B cell (primary cell): ENCODE measurements at regions of chr13 and their contacts with region 1.

Region 1: DNA sequence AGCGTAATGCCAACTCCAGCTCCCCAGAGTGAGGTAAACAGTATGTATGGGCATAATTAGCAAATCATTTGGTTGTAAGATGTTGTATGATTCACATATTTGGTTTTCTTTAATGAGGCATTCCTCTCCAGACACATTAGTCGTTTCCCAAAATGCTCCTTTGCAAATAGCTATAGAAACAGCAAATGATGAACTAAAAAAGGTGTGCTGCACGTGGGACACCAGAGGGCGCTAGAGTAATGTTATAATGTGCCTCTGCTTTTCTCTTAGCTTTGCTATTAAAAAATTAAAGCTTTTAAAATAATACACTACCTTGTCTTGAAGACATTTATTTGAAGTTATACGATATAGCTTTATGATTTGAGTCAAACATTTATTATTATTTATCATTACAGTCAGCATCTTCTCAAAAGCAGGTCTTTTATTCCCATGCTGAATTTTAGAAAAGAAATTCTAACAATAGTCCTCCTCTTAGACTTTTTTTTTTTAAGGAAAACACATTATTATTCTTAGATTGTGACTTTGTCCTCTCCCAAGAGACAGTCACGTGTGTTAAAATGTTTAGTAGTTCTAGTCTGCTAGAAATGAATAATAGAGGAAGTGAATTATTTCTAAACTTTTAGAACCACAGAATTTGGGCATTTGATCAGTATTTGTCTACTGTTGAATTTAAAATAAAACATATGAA is 121.6 kb upstream of the FRY start:
- DNase-seq: peak; percentile 75
- ATAC-seq: peak; percentile 49
- H3K4me3 ChIP-seq: no peak overlapping the region
- H3K4me3 Mint-ChIP-seq: no peak overlapping the region
- H3K27ac ChIP-seq: peak overlapping the region in 1 of 2 donors; percentile 7
- H3K27ac Mint-ChIP-seq: no peak overlapping the region
- H3K4me1 ChIP-seq: peaks cover 4 to 7% of the 10 kb centered on the region in 2 donors
- H3K4me1 Mint-ChIP-seq: peaks cover 10% of the 10 kb centered on the region
- H3K27me3 ChIP-seq: no peaks in the 10 kb centered on the region
- H3K27me3 Mint-ChIP-seq: peaks cover 6% of the 10 kb centered on the region
- CTCF ChIP-seq: peak; percentile 97

Region 2: DNA sequence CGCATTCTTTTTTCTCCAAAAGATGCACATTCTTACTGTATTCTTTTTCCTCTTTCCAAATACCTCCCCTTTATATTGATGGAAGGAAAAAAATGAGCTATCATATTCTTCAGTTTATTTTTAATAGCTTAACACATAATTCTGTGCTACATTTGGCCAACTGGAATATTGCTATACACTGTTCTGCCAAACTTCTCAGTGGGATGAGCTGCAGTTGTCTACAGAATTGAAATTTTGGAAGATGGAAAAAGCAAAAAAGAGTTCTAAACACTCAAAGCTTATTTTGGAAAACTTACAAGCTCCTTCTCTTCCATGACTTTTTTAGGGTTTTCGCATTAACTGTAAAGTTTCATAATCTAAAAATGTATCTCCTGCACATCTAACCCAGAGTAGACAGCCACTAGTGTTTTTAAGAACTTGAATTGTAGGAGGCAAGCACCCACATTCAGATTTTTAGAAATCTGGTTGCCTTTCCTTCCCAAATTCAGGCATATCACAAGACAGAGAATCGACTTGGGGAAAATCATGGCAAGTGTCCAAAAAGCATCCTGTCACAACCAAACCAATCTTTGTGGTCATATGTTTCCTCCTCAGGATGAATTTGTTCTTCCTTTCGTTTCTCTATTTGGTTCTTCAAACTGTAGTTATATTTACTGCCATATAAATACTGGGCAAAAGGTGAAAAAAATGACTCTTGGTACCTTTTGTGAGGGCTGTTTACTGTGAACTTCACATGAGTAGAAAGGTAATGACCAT is 10.1 kb after region 1 on chr13:
- CTCF ChIA-PET with region 1: interaction called, 32 read pairs
- POLR2A ChIA-PET with region 1: no interaction called
- intact Hi-C with region 1: no loop called
- DNase-seq: no peak
- ATAC-seq: no peak
- H3K4me3 ChIP-seq: no peak overlapping the region
- H3K4me3 Mint-ChIP-seq: no peak overlapping the region
- H3K27ac ChIP-seq: no peak overlapping the region
- H3K27ac Mint-ChIP-seq: no peak overlapping the region
- H3K4me1 ChIP-seq: peaks cover 0 to 6% of the 10 kb centered on the region in 2 donors
- H3K4me1 Mint-ChIP-seq: peaks cover 8% of the 10 kb centered on the region
- H3K27me3 ChIP-seq: no peaks in the 10 kb centered on the region
- H3K27me3 Mint-ChIP-seq: no peaks in the 10 kb centered on the region
- CTCF ChIP-seq: no peak

Region 3: DNA sequence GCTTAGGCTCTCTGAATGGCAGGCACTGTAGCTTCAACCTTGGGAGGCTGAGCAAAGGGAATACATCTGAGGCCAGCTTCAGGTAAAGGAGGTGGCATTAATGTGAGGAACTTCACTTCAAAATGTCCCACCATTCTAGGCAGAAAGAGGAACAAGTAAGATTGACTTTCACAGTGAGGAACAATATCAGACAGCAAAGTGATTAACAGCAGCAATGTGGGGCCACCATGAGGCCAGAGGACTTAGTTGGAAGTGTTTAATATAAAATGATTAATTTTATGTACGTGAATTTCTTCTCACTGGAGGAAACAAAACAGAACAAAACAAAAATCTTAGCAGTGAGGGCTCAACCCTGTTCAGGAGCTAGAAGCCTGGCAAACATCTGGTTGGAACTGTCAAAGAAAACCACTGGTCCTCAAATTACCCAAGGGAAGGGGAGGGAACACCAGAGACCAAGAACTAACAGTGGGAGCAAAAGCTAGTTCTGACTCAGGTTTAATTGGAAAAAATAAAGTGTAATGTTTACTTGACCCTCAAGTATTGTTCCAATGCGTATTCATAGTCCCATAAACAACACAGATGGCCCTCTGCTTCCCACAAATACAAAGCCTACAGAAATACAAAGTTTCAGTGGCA is 77.6 kb after region 1 on chr13:
- CTCF ChIA-PET with region 1: interaction called, 70 read pairs
- POLR2A ChIA-PET with region 1: no interaction called
- intact Hi-C with region 1: loop called (anchors 1 kb)
- DNase-seq: peak; percentile 56
- ATAC-seq: peak; percentile 45
- H3K4me3 ChIP-seq: no peak overlapping the region
- H3K4me3 Mint-ChIP-seq: no peak overlapping the region
- H3K27ac ChIP-seq: peak overlapping the region in 1 of 2 donors; percentile 16
- H3K27ac Mint-ChIP-seq: no peak overlapping the region
- H3K4me1 ChIP-seq: peaks cover 4 to 7% of the 10 kb centered on the region in 2 donors
- H3K4me1 Mint-ChIP-seq: peaks cover 9% of the 10 kb centered on the region
- H3K27me3 ChIP-seq: no peaks in the 10 kb centered on the region
- H3K27me3 Mint-ChIP-seq: no peaks in the 10 kb centered on the region
- CTCF ChIP-seq: peak; percentile 18

Region 4: GRCh38 chr13:32310134-32310706 is 400.2 kb after region 1 on chr13:
- CTCF ChIA-PET with region 1: interaction called, 23 read pairs
- POLR2A ChIA-PET with region 1: interaction called, 6 read pairs
- intact Hi-C with region 1: loop called (anchors 1 kb)
- DNase-seq: peak; percentile 71
- ATAC-seq: peak; percentile 63
- H3K4me3 ChIP-seq: peak overlapping the region in 3 of 5 experiments; percentile 21 to 31 (median 23)
- H3K4me3 Mint-ChIP-seq: peak overlapping the region; percentile 52
- H3K27ac ChIP-seq: no peak overlapping the region
- H3K27ac Mint-ChIP-seq: no peak overlapping the region
- H3K4me1 ChIP-seq: peaks cover 3 to 15% of the 10 kb centered on the region in 2 donors
- H3K4me1 Mint-ChIP-seq: peaks cover 15% of the 10 kb centered on the region
- H3K27me3 ChIP-seq: no peaks in the 10 kb centered on the region
- H3K27me3 Mint-ChIP-seq: no peaks in the 10 kb centered on the region
- CTCF ChIP-seq: peak; percentile 75

Region 5: GRCh38 chr13:32443111-32443510 is 533.1 kb after region 1 on chr13:
- CTCF ChIA-PET with region 1: interaction called, 10 read pairs
- POLR2A ChIA-PET with region 1: no interaction called
- intact Hi-C with region 1: loop called (anchors 1 kb)
- DNase-seq: peak; percentile 76
- ATAC-seq: peak; percentile 88
- H3K4me3 ChIP-seq: no peak overlapping the region
- H3K4me3 Mint-ChIP-seq: peak overlapping the region; percentile 12
- H3K27ac ChIP-seq: peak overlapping the region; percentile 19 to 55
- H3K27ac Mint-ChIP-seq: peak overlapping the region; percentile 67
- H3K4me1 ChIP-seq: peaks cover 13 to 15% of the 10 kb centered on the region in 2 donors
- H3K4me1 Mint-ChIP-seq: peaks cover 21% of the 10 kb centered on the region
- H3K27me3 ChIP-seq: no peaks in the 10 kb centered on the region
- H3K27me3 Mint-ChIP-seq: no peaks in the 10 kb centered on the region
- CTCF ChIP-seq: peak; percentile 72